ENCODE measurements at regions of chr3 and their contacts with region 1.

Region 1: GRCh38 chr3:73100741-73101559 is 39.5 kb downstream of the EBLN2 start:
- DNase-seq: peak; percentile 96
- H3K4me3 ChIP-seq: no peak overlapping the region
- H3K27ac ChIP-seq: no peak overlapping the region
- H3K4me1 ChIP-seq: no peaks in the 10 kb centered on the region
- H3K27me3 ChIP-seq: no peaks in the 10 kb centered on the region
- CTCF ChIP-seq: peak; percentile 90 to 96 (median 93)
- POLR2A ChIP-seq: no peak

Region 2: GRCh38 chr3:72887705-72888545 is 213.0 kb before region 1 on chr3 and contains the start of gene GXYLT2:
- intact Hi-C with region 1: no loop called
- DNase-seq: peak; percentile 92
- H3K4me3 ChIP-seq: peak within 1 kb of the TSS; percentile 53 to 62
- H3K27ac ChIP-seq: peak within 1 kb of the TSS; percentile 56 to 68
- H3K4me1 ChIP-seq: peaks cover 24% of the 10 kb centered on the region
- H3K27me3 ChIP-seq: no peaks in the 10 kb centered on the region
- CTCF ChIP-seq: peak in 1 of 3 experiments; percentile 9
- POLR2A ChIP-seq: no peak
- total RNA-seq, gene GXYLT2: 17.6 to 27.8 TPM

Region 3: DNA sequence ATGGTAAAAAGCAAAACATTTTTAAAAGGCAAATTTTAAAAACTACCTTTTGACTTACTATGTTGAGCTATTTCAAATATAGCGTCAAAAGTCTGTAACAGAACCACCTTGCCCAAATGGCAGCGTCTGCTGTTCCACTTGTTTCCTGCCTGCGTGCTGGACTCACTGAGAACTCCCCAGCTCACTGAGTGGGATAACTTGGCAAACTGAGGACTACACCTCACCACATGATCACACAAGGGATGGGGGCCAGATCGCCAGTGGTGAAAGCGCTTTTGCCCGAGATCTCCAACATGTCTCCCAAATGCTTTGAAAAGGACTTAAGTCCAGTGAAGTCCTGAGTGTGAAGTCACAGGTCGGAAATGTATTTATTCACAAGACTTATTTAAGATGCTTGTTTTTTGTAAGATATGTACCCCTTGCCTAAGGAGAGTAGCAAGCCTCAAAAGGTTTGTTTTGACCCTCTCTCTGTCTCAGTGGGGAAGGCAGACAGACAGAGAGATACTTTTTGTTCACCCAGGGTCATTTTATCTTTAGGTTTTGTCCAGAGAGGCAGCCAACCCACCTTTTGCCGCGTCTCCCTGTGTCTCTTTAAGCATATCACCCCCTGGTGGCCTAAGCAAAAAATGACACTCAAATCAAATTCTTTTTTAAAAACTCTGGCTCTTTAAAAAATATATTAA is 331.2 kb after region 1 on chr3:
- intact Hi-C with region 1: loop called (anchors 5 kb)
- DNase-seq: peak; percentile 59
- H3K4me3 ChIP-seq: no peak overlapping the region
- H3K27ac ChIP-seq: no peak overlapping the region
- H3K4me1 ChIP-seq: peaks cover 3% of the 10 kb centered on the region
- H3K27me3 ChIP-seq: no peaks in the 10 kb centered on the region
- CTCF ChIP-seq: peak; percentile 55 to 88 (median 60)
- POLR2A ChIP-seq: no peak

Region 4: GRCh38 chr3:73502609-73503583 is 401.9 kb after region 1 on chr3:
- intact Hi-C with region 1: loop called (anchors 10 kb)
- DNase-seq: peak; percentile 56
- H3K4me3 ChIP-seq: no peak overlapping the region
- H3K27ac ChIP-seq: no peak overlapping the region
- H3K4me1 ChIP-seq: no peaks in the 10 kb centered on the region
- H3K27me3 ChIP-seq: no peaks in the 10 kb centered on the region
- CTCF ChIP-seq: peak; percentile 70 to 80 (median 73)
- POLR2A ChIP-seq: no peak